ENCODE measurements at regions of chr11 and their contacts with region 1.

Region 1: DNA sequence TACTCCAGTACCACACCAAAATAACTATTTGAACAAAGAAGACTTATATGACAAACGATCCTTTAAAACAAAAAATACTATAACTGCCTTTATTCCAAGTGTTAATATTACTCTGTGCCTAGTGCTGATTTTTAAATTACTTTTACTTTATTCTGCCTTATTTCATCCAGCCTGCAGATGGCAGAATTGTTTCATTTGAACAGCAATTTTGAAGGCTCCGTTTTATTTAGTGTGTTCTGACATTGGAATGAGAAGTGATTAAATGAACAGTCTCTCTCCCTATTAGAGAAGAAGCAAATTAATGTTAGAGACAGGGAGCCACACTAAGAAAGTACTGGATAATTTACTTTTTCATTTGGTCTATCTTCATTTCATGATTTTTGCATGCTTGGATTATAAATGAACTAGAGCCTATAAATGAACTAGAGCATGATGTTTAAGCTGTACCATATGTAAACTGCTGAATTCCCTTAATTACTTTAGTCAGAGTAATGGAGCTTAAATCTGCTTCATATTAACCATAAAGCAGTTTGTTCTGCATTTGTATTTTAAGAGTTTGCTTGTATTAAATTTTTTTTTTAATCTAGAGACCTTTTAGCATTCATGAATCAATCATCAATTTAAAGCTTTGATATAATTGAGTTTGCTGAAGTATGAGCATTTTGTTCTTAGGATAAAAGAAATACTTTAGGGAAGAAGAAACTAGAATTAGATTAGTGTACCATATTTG is 9.8 kb downstream of the PDHX start:
- DNase-seq: peak in 1 of 2 donors; percentile 79
- ATAC-seq: peak; percentile 58 to 80 (median 77)
- H3K4me3 ChIP-seq: no peak overlapping the region
- H3K4me3 Mint-ChIP-seq: no peak overlapping the region
- H3K27ac ChIP-seq: no peak overlapping the region
- H3K27ac Mint-ChIP-seq: no peak overlapping the region
- H3K4me1 ChIP-seq: no peaks in the 10 kb centered on the region
- H3K4me1 Mint-ChIP-seq: peaks cover 7 to 21% of the 10 kb centered on the region in 2 donors
- H3K27me3 ChIP-seq: no peaks in the 10 kb centered on the region
- H3K27me3 Mint-ChIP-seq: no peaks in the 10 kb centered on the region
- CTCF ChIP-seq: peak; percentile 79

Region 2: DNA sequence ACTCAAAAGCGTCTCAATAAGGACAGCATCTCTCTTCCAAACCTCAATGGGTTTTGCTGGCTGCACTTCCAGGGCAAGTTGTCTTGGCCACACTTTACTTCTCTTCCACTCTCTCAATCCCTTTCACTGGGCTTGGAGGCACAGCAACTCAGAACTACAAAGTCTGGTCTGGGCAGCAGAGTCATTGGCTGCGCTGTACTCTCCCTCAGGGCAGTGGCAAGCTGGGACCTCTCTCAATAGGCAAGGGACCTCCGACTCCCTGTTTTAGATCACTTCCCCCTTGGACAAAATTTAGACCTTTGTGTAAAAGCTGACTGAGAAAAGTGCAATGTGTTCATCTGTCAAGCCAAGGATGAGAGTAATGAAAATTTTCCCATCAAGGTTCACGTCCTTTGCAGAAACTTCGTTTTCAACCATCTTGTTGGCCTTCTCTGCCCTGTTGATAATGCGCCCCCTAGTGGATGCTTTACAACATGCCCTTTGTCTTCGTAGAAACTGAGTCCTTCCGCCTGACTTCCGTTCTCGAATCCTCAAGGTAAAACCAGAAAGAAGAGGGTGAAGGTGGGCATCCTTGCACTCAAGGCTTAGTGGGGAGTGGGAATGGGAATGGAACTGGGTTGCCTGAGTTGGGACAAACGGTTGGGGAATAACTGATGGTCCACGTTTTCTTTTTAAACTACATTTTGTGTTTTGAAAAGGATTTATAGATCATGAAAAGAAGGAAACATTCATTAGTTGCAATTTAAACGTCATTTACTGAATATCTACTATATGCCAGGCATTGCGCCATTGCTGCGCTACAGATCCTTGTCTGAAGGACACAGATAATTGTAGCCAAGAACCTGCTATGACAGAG is 311.8 kb after region 1 on chr11:
- intact Hi-C with region 1: loop called (anchors 1 kb)
- DNase-seq: peak in 1 of 2 donors; percentile 86
- ATAC-seq: peak in 2 of 3 donors; percentile 56 to 58
- H3K4me3 ChIP-seq: no peak overlapping the region
- H3K4me3 Mint-ChIP-seq: no peak overlapping the region
- H3K27ac ChIP-seq: no peak overlapping the region
- H3K27ac Mint-ChIP-seq: no peak overlapping the region
- H3K4me1 ChIP-seq: peaks cover 30% of the 10 kb centered on the region
- H3K4me1 Mint-ChIP-seq: peaks cover 45 to 47% of the 10 kb centered on the region in 2 donors
- H3K27me3 ChIP-seq: no peaks in the 10 kb centered on the region
- H3K27me3 Mint-ChIP-seq: peaks cover 3 to 13% of the 10 kb centered on the region in 2 donors
- CTCF ChIP-seq: peak; percentile 87

Region 3: DNA sequence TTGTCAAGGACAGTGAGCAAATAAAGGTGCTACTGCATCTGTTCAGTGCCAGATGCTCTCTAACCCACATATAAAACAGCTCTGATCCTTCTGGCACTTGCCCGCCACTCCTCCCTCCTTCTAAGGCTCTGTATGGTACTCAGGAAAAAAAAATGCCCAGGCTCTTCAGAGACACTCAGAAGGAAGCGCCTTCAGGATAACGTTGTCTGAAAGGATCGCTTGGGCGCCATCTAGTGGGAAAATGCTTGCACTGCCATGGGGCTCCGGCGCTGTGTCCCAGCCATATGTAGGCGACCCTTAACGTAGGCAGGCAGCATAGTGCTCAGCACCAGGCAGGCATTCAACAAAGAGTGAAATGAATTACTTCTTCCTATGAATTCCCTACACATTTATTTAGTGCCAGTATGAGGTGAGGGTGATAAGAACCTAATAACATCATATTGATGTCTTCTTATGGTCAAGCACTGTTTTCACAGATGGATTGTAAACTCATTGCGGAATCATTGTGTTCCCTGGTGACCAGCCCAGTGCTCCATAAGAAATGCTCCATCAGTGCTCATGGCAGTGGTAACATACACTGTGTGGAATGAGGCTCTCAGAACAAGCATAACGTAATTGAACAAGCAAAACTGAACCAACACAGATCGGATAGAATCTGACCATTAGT is 559.5 kb after region 1 on chr11:
- intact Hi-C with region 1: loop called (anchors 1 kb)
- DNase-seq: peak; percentile 56 to 79
- ATAC-seq: peak; percentile 70 to 96 (median 81)
- H3K4me3 ChIP-seq: no peak overlapping the region
- H3K4me3 Mint-ChIP-seq: no peak overlapping the region
- H3K27ac ChIP-seq: no peak overlapping the region
- H3K27ac Mint-ChIP-seq: no peak overlapping the region
- H3K4me1 ChIP-seq: no peaks in the 10 kb centered on the region
- H3K4me1 Mint-ChIP-seq: no peaks in the 10 kb centered on the region
- H3K27me3 ChIP-seq: peaks cover 3% of the 10 kb centered on the region
- H3K27me3 Mint-ChIP-seq: peaks cover 18 to 41% of the 10 kb centered on the region in 2 donors
- CTCF ChIP-seq: peak; percentile 89